Sigmoid colon (tissue), 7 donors: ENCODE measurements at regions of chr1 and their contacts with region 1.

Region 1: GRCh38 chr1:23867953-23868556 is at the start of gene FUCA1:
- DNase-seq: peak; percentile 96
- H3K4me3 ChIP-seq: peak within 1 kb of the TSS; percentile 77 to 96 (median 84)
- H3K27ac ChIP-seq: peak within 1 kb of the TSS; percentile 71 to 81 (median 78)
- H3K4me1 ChIP-seq: peaks cover 0 to 23% (median 14%) of the 10 kb centered on the region in 4 donors
- H3K27me3 ChIP-seq: no peaks in the 10 kb centered on the region
- CTCF ChIP-seq: peak; percentile 95 to 97 (median 96)
- EP300 ChIP-seq: no peak
- POLR2A ChIP-seq: peak; percentile 53 to 68
- total RNA-seq, gene FUCA1: 14.1 to 28.9 (median 21.8) TPM

Region 2: DNA sequence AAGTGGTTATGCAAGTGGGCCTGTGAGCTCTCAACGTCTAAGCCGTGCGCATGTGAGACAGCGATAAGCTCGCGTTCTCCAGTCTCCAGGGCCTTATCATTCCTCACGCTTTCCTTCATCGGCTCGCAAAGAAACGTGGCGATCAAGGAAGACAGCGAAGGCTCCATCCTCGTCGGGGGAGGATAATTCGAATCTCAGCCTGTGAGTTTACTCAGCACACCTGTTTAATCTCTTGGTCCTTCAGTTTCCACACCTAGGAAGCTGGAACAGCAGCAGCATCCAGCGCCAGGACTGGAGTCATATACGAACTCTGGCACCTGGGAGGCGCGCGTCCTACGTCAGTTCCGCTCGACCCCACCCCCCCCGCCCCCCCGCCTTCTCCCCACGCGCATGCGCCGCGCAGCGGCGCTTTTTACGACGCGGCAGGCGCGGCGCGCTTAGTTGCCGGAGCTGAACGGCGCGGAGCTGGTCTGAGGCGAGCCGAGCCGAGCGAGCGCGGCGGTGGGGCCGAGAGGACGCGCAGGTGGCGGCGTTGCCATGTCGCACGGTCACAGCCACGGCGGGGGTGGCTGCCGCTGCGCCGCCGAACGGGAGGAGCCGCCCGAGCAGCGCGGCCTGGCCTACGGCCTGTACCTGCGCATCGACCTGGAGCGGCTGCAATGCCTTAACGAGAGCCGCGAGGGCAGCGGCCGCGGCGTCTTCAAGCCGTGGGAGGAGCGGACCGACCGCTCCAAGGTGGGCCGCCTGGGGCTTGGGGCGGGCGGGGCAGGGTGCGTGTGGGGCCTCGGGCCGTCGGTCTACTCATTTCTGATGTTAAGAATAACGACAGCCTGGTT is 89.9 kb before region 1 on chr1 and contains the start of gene PITHD1:
- intact Hi-C with region 1: loop called (anchors 10 kb)
- DNase-seq: peak; percentile 94
- H3K4me3 ChIP-seq: peak within 1 kb of the TSS; percentile 60 to 100 (median 82)
- H3K27ac ChIP-seq: peak within 1 kb of the TSS; percentile 80 to 96 (median 90)
- H3K4me1 ChIP-seq: peaks cover 0 to 36% (median 24%) of the 10 kb centered on the region in 4 donors
- H3K27me3 ChIP-seq: no peaks in the 10 kb centered on the region
- CTCF ChIP-seq: no peak
- EP300 ChIP-seq: no peak
- POLR2A ChIP-seq: peak; percentile 22 to 39
- total RNA-seq, gene PITHD1: 47.9 to 78.7 (median 50.9) TPM

Region 3: GRCh38 chr1:23800400-23801337 is 67.4 kb before region 1 on chr1 and contains the start of gene GALE:
- intact Hi-C with region 1: loop called (anchors 10 kb)
- DNase-seq: peak; percentile 98
- H3K4me3 ChIP-seq: peak within 1 kb of the TSS; percentile 69 to 93 (median 76)
- H3K27ac ChIP-seq: peak within 1 kb of the TSS; percentile 86 to 94 (median 90)
- H3K4me1 ChIP-seq: peaks cover 0 to 28% (median 20%) of the 10 kb centered on the region in 4 donors
- H3K27me3 ChIP-seq: no peaks in the 10 kb centered on the region
- CTCF ChIP-seq: no peak
- EP300 ChIP-seq: peak in 1 of 4 donors; percentile 70
- POLR2A ChIP-seq: peak; percentile 62 to 79
- total RNA-seq, gene GALE: 7.8 to 11.5 (median 9.5) TPM

Region 4: DNA sequence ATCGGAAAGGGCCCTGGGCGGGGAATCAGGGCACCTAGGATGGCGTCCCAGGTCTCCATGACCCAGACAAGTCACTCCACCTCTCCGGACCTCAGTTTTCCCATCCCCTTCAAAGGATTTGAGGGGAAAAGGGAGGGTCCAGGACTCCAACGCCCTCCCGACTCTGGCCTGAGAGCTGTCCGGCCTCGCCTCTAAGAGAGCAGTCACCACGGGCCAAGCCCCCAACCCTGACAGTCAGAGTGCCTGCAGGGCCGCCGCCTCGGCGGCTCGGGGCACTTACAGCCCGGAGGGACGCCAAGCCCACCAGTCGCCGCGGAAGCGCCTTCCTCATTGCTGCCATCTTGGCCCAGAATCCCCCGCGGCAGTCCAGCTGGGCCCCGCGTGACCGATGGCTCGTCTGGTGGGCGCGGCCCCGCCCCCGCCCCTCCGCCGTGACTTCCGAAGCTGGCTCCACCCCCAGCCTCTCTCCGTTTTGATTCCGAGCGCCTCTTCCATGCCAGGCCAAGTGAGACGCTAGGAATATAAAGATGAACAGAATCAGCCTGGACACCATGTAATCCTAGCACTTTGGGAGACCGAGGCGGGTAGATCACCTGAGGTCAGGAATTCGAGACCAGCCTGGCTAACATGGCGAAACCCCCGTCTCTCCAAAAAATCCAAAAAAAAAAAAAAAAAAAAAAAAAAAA is 42.8 kb before region 1 on chr1 and contains the start of gene HMGCL:
- intact Hi-C with region 1: loop called (anchors 2 kb)
- DNase-seq: peak; percentile 95
- H3K4me3 ChIP-seq: peak within 1 kb of the TSS; percentile 61 to 97 (median 92)
- H3K27ac ChIP-seq: peak within 1 kb of the TSS; percentile 85 to 96 (median 95)
- H3K4me1 ChIP-seq: peaks cover 0 to 14% (median 9%) of the 10 kb centered on the region in 4 donors
- H3K27me3 ChIP-seq: no peaks in the 10 kb centered on the region
- CTCF ChIP-seq: no peak
- EP300 ChIP-seq: peak in 1 of 4 donors; percentile 60
- POLR2A ChIP-seq: peak; percentile 87 to 89
- total RNA-seq, gene HMGCL: 24.8 to 47.4 (median 37.9) TPM

Region 5: DNA sequence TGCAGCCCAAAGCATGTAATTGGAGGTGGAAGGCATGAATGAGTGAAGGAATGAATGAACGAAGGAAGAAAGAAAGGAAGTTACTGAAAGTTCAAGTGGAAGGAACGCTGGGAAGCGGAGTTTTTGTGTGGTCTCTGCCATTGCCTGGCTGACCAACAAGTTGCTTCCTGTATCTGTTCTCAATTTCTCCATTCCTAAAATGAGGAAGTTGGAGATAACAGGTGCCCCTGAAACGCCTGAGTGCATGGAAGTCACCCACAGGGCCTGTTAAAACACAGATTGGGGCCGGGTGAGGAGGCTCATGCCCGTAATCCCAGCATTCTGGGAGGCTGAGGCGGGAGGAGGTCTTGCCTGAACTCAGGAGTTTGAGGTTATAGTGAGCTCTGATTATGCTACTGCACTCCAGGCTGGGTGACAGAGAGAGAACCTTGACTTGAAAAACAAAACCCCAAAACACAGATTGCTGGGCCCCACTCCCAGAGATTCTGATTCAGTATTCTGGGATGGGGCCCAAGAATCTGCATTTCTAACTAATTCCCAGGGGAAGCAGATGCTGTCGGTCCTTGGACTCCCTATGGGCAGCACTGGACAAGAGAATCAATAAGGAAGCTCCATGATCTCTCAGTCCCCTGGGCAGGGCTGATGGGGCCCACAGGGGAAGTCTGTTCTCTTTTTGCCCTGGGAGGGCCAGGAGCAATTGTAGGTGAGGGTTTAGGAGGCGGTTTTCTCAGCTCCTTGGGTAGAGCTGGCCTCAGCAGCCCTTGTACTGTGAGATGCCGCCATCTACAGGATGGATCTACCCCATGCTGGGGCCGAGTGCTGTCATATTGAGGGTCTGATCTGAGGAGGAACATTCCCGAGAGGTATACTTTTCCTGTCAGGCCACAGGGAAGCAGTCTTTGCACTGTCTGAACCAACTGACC is 48.4 kb after region 1 on chr1:
- intact Hi-C with region 1: loop called (anchors 1 kb)
- DNase-seq: peak; percentile 81
- H3K4me3 ChIP-seq: no peak overlapping the region
- H3K27ac ChIP-seq: no peak overlapping the region
- H3K4me1 ChIP-seq: peaks cover 0 to 26% (median 21%) of the 10 kb centered on the region in 4 donors
- H3K27me3 ChIP-seq: no peaks in the 10 kb centered on the region
- CTCF ChIP-seq: peak in 3 of 4 experiments; percentile 20 to 58 (median 52)
- EP300 ChIP-seq: no peak
- POLR2A ChIP-seq: no peak

Region 6: GRCh38 chr1:24027838-24028468 is 159.9 kb after region 1 on chr1:
- intact Hi-C with region 1: loop called (anchors 5 kb)
- DNase-seq: no peak
- H3K4me3 ChIP-seq: no peak overlapping the region
- H3K27ac ChIP-seq: peak overlapping the region in 1 of 4 donors; percentile 37
- H3K4me1 ChIP-seq: peaks cover 0 to 12% (median 9%) of the 10 kb centered on the region in 4 donors
- H3K27me3 ChIP-seq: no peaks in the 10 kb centered on the region
- CTCF ChIP-seq: peak in 3 of 4 experiments; percentile 51 to 57 (median 53)
- EP300 ChIP-seq: no peak
- POLR2A ChIP-seq: no peak